A549 (cell line): ENCODE measurements at regions of chr3 and their contacts with region 1.

Region 1: GRCh38 chr3:160400702-160401150 is 1.3 kb downstream of the SMC4 start:
- DNase-seq: no peak
- ATAC-seq: peak; percentile 24 to 32
- H3K4me3 ChIP-seq: peak overlapping the region; percentile 90
- H3K27ac ChIP-seq: peak overlapping the region; percentile 92 to 95
- H3K4me1 ChIP-seq: peaks cover 28% of the 10 kb centered on the region
- CTCF ChIP-seq: no peak
- EP300 ChIP-seq: no peak
- POLR2A ChIP-seq: no peak
- RAD21 ChIP-seq: no peak

Region 2: GRCh38 chr3:160413613-160414248 is 13.0 kb after region 1 on chr3:
- CTCF ChIA-PET with region 1: interaction called, 12 read pairs
- POLR2A ChIA-PET with region 1: interaction called, 8 read pairs
- DNase-seq: peak; percentile 55 to 79
- ATAC-seq: peak; percentile 82 to 88
- H3K4me3 ChIP-seq: no peak overlapping the region
- H3K27ac ChIP-seq: no peak overlapping the region
- H3K4me1 ChIP-seq: peaks cover 16% of the 10 kb centered on the region; the same call in 2 of the 3 replicates
- CTCF ChIP-seq: peak; percentile 90
- EP300 ChIP-seq: no peak
- POLR2A ChIP-seq: no peak
- RAD21 ChIP-seq: peak; percentile 78 to 85